Heart left ventricle (tissue), 16 donors: ENCODE measurements at regions of chr12 and their contacts with region 1.

Region 1: GRCh38 chr12:8687846-8688601 is 9.8 kb upstream of the RIMKLB start:
- DNase-seq: peak in 3 of 5 donors; percentile 31 to 41 (median 33)
- ATAC-seq: peak; percentile 60 to 97 (median 88)
- H3K4me3 ChIP-seq: no peak overlapping the region
- H3K27ac ChIP-seq: peak overlapping the region in 1 of 12 donors; percentile 78
- H3K4me1 ChIP-seq: peaks cover 0 to 27% (median 15%) of the 10 kb centered on the region in 12 donors
- H3K27me3 ChIP-seq: no peaks in the 10 kb centered on the region
- CTCF ChIP-seq: no peak
- POLR2A ChIP-seq: no peak

Region 2: DNA sequence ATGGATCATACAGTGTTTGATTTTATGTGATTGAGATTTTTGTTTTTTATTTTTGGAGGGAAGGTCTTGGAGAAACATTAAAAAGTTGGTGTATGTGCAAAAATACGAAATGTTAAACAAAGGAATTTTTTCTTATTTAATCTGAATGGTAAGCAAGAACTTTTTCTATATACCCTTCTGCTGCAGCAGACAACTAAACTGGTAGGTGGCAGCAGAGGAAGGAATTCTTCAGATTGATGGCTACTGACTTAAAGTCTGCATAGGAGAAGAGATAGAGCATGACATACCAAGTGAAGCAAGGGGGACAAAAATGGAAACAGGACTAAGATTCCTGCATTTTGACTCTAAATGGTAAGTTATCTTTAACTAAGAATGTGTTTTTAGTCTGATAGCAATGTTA is 92.4 kb after region 1 on chr12:
- intact Hi-C with region 1: loop called in 2 of 10 experiments (anchors 5 to 10 kb)
- DNase-seq: no peak
- ATAC-seq: peak in 1 of 4 donors; percentile 63
- H3K4me3 ChIP-seq: no peak overlapping the region
- H3K27ac ChIP-seq: no peak overlapping the region
- H3K4me1 ChIP-seq: peaks cover 0 to 26% (median 4%) of the 10 kb centered on the region in 12 donors
- H3K27me3 ChIP-seq: no peaks in the 10 kb centered on the region
- CTCF ChIP-seq: peak in 11 of 12 donors; percentile 6 to 50 (median 38)
- POLR2A ChIP-seq: no peak

Region 3: GRCh38 chr12:8823565-8824300 is 135.7 kb after region 1 on chr12:
- intact Hi-C with region 1: loop called in 8 of 10 experiments (anchors 2 to 10 kb)
- DNase-seq: peak in 2 of 5 donors; percentile 14 to 26
- ATAC-seq: peak in 2 of 4 donors; percentile 46 to 53
- H3K4me3 ChIP-seq: no peak overlapping the region
- H3K27ac ChIP-seq: no peak overlapping the region
- H3K4me1 ChIP-seq: no peaks in the 10 kb centered on the region
- H3K27me3 ChIP-seq: no peaks in the 10 kb centered on the region
- CTCF ChIP-seq: peak; percentile 30 to 70 (median 52)
- POLR2A ChIP-seq: no peak

Region 4: DNA sequence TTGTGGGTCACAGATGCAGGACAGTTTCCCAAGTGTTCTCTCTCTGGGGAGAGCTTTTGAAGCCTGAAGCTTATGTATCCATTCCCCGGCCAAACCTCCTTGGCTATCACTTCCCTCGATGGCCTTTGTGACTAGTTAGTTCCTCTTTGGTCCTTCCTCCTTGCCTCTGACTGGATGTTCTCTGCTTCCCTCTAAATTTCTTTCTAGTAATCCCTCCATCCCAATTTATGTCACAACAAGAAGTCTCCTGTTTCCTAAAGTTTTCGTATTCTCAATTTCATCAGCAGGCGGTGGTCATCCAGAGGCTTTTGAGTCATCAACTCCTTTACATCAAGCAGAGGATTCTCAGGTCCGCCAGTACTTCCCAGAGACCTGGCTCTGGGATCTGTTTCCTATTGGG is 161.9 kb after region 1 on chr12:
- intact Hi-C with region 1: loop called in 3 of 10 experiments (anchors 10 kb)
- DNase-seq: no peak
- ATAC-seq: no peak
- H3K4me3 ChIP-seq: no peak overlapping the region
- H3K27ac ChIP-seq: no peak overlapping the region
- H3K4me1 ChIP-seq: peaks cover 0 to 8% (median 3%) of the 10 kb centered on the region in 12 donors
- H3K27me3 ChIP-seq: no peaks in the 10 kb centered on the region
- CTCF ChIP-seq: no peak
- POLR2A ChIP-seq: no peak

Region 5: GRCh38 chr12:8890313-8891085 is 202.5 kb after region 1 on chr12:
- intact Hi-C with region 1: loop called in 6 of 10 experiments (anchors 2 to 10 kb)
- DNase-seq: peak in 3 of 5 donors; percentile 39 to 45 (median 45)
- ATAC-seq: peak; percentile 48 to 88 (median 68)
- H3K4me3 ChIP-seq: peak overlapping the region in 11 of 12 donors; percentile 13 to 70 (median 52)
- H3K27ac ChIP-seq: peak overlapping the region in 3 of 12 donors; percentile 32 to 55 (median 36)
- H3K4me1 ChIP-seq: peaks cover 0 to 5% (median 0%) of the 10 kb centered on the region in 12 donors
- H3K27me3 ChIP-seq: no peaks in the 10 kb centered on the region
- CTCF ChIP-seq: peak; percentile 79 to 95 (median 89)
- POLR2A ChIP-seq: no peak

Region 6: DNA sequence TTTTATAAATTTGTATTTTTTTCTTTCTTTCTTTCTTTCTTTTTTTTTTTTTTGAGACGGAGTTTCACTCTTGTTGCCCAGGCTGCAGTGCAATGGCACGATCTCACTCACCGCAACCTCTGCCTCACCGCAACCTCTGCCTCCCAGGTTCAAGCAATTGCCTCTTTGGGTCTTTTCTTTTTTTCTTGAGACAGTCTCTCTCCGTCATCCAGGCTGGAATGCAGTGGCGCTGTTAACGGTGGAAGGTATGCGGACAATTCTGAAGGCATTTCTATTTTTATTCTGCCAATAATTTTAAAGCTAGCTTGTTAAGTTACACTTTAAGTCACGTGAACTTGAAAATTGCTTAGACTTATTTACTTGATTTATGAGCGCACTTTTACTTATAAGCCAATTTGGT is 217.5 kb after region 1 on chr12:
- intact Hi-C with region 1: loop called in 1 of 10 experiments (anchors 5 kb)
- DNase-seq: no peak
- ATAC-seq: peak in 3 of 4 donors; percentile 50 to 73 (median 63)
- H3K4me3 ChIP-seq: peak overlapping the region in 1 of 12 donors; percentile 3
- H3K27ac ChIP-seq: peak overlapping the region in 11 of 12 donors; percentile 5 to 75 (median 50)
- H3K4me1 ChIP-seq: peaks cover 0 to 18% (median 0%) of the 10 kb centered on the region in 12 donors
- H3K27me3 ChIP-seq: no peaks in the 10 kb centered on the region
- CTCF ChIP-seq: no peak
- POLR2A ChIP-seq: no peak

Region 7: DNA sequence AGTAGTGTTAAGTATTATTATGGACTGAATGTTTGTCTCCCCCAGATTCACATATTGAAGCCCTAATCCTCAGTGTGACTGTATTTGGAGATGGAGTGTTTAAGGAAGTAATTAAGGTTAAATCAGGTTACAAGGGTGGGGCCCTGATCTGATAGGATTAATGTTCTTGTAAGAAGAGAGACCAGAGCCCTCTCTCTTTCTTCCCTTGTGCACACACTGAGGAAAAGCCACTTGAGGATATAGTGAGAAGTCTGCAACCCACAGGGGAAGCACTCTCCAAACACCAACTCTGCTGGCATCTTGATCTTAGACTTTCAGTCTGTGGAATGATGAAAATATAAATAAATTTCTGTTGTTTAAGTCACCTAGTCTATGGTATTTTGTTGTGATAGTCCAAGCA is 299.1 kb after region 1 on chr12:
- intact Hi-C with region 1: no loop called
- DNase-seq: no peak
- ATAC-seq: no peak
- H3K4me3 ChIP-seq: no peak overlapping the region
- H3K27ac ChIP-seq: peak overlapping the region in 1 of 12 donors; percentile 58
- H3K4me1 ChIP-seq: peaks cover 0 to 48% (median 8%) of the 10 kb centered on the region in 12 donors
- H3K27me3 ChIP-seq: no peaks in the 10 kb centered on the region
- CTCF ChIP-seq: no peak
- POLR2A ChIP-seq: no peak

Region 8: GRCh38 chr12:9096563-9097176 is 408.6 kb after region 1 on chr12:
- intact Hi-C with region 1: no loop called
- DNase-seq: no peak
- ATAC-seq: no peak
- H3K4me3 ChIP-seq: no peak overlapping the region
- H3K27ac ChIP-seq: no peak overlapping the region
- H3K4me1 ChIP-seq: peaks cover 0 to 27% (median 10%) of the 10 kb centered on the region in 12 donors
- H3K27me3 ChIP-seq: no peaks in the 10 kb centered on the region
- CTCF ChIP-seq: no peak
- POLR2A ChIP-seq: no peak

Region 9: GRCh38 chr12:9391815-9392214 is 703.8 kb after region 1 on chr12:
- intact Hi-C with region 1: no loop called
- DNase-seq: no peak
- ATAC-seq: no peak
- H3K4me3 ChIP-seq: no peak overlapping the region
- H3K27ac ChIP-seq: no peak overlapping the region
- H3K4me1 ChIP-seq: peaks cover 0 to 9% (median 0%) of the 10 kb centered on the region in 12 donors
- H3K27me3 ChIP-seq: no peaks in the 10 kb centered on the region
- CTCF ChIP-seq: no peak
- POLR2A ChIP-seq: no peak